Vagina (tissue), 2 donors: ENCODE measurements at regions of chr17 and their contacts with region 1.

Region 1: GRCh38 chr17:7351665-7352501 is at the start of gene KCTD11:
- DNase-seq: no peak
- H3K4me3 ChIP-seq: peak within 1 kb of the TSS; percentile 87 to 99
- H3K27ac ChIP-seq: peak within 1 kb of the TSS; percentile 96
- H3K4me1 ChIP-seq: peaks cover 52% of the 10 kb centered on the region
- H3K27me3 ChIP-seq: no peaks in the 10 kb centered on the region
- CTCF ChIP-seq: peak in 2 of 3 experiments; percentile 10
- POLR2A ChIP-seq: peak in 1 of 2 donors; percentile 47
- total RNA-seq, gene KCTD11: 12.5 TPM

Region 2: GRCh38 chr17:7314719-7315569 is 36.9 kb before region 1 on chr17 and contains the start of gene GPS2:
- intact Hi-C with region 1: loop called (anchors 5 kb)
- DNase-seq: no peak
- H3K4me3 ChIP-seq: peak within 1 kb of the TSS; percentile 87 to 95
- H3K27ac ChIP-seq: peak within 1 kb of the TSS; percentile 91
- H3K4me1 ChIP-seq: peaks cover 50% of the 10 kb centered on the region
- H3K27me3 ChIP-seq: no peaks in the 10 kb centered on the region
- CTCF ChIP-seq: no peak
- POLR2A ChIP-seq: peak in 1 of 2 donors; percentile 60
- total RNA-seq, gene GPS2: 51.1 TPM

Region 3: GRCh38 chr17:7363311-7363710 is 11.4 kb after region 1 on chr17:
- intact Hi-C with region 1: no loop called
- DNase-seq: no peak
- H3K4me3 ChIP-seq: no peak overlapping the region
- H3K27ac ChIP-seq: no peak overlapping the region
- H3K4me1 ChIP-seq: no peaks in the 10 kb centered on the region
- H3K27me3 ChIP-seq: no peaks in the 10 kb centered on the region
- CTCF ChIP-seq: no peak
- POLR2A ChIP-seq: no peak

Region 4: GRCh38 chr17:7404737-7405349 is 53.0 kb after region 1 on chr17:
- intact Hi-C with region 1: loop called (anchors 5 kb)
- DNase-seq: no peak
- H3K4me3 ChIP-seq: peak overlapping the region; percentile 87 to 98
- H3K27ac ChIP-seq: peak overlapping the region; percentile 98
- H3K4me1 ChIP-seq: peaks cover 34% of the 10 kb centered on the region
- H3K27me3 ChIP-seq: no peaks in the 10 kb centered on the region
- CTCF ChIP-seq: no peak
- POLR2A ChIP-seq: peak in 1 of 2 donors; percentile 56

Region 5: GRCh38 chr17:7435221-7435675 is 83.4 kb after region 1 on chr17 and contains the start of gene TMEM102:
- intact Hi-C with region 1: loop called (anchors 5 kb)
- DNase-seq: peak in 1 of 2 donors; percentile 95
- H3K4me3 ChIP-seq: peak within 1 kb of the TSS; percentile 34 to 49
- H3K27ac ChIP-seq: peak within 1 kb of the TSS; percentile 81
- H3K4me1 ChIP-seq: peaks cover 48% of the 10 kb centered on the region
- H3K27me3 ChIP-seq: no peaks in the 10 kb centered on the region
- CTCF ChIP-seq: no peak
- POLR2A ChIP-seq: peak in 1 of 2 donors; percentile 20
- total RNA-seq, gene TMEM102: 9.8 TPM

Region 6: GRCh38 chr17:7484067-7484918 is 132.4 kb after region 1 on chr17 and contains the start of gene POLR2A:
- intact Hi-C with region 1: loop called (anchors 5 kb)
- DNase-seq: peak in 1 of 2 donors; percentile 100
- H3K4me3 ChIP-seq: peak within 1 kb of the TSS; percentile 53 to 64
- H3K27ac ChIP-seq: peak within 1 kb of the TSS; percentile 100
- H3K4me1 ChIP-seq: peaks cover 74% of the 10 kb centered on the region
- H3K27me3 ChIP-seq: no peaks in the 10 kb centered on the region
- CTCF ChIP-seq: no peak
- POLR2A ChIP-seq: peak; percentile 92 to 100
- total RNA-seq, gene POLR2A: 118 TPM

Region 7: DNA sequence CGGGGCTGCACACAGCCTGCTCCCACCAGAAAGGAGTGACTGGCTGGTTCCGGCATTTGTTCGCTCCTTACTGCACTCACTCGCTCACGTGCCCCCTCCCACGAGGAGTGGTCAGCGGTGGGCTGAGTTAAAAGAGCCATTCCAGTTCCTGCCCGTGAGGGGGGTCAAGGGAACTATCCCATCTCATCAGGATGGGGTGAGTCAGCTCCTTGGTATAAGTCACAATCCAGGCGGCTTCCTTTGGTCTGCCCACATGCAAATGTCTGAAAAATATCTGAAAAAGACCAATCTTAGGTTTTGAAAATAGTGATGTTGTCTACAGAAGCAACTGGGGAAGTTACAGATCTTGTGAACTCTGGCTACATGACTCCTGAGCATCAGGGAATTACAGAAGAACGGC is 187.0 kb after region 1 on chr17:
- intact Hi-C with region 1: no loop called
- DNase-seq: no peak
- H3K4me3 ChIP-seq: no peak overlapping the region
- H3K27ac ChIP-seq: no peak overlapping the region
- H3K4me1 ChIP-seq: no peaks in the 10 kb centered on the region
- H3K27me3 ChIP-seq: no peaks in the 10 kb centered on the region
- CTCF ChIP-seq: no peak
- POLR2A ChIP-seq: no peak

Region 8: DNA sequence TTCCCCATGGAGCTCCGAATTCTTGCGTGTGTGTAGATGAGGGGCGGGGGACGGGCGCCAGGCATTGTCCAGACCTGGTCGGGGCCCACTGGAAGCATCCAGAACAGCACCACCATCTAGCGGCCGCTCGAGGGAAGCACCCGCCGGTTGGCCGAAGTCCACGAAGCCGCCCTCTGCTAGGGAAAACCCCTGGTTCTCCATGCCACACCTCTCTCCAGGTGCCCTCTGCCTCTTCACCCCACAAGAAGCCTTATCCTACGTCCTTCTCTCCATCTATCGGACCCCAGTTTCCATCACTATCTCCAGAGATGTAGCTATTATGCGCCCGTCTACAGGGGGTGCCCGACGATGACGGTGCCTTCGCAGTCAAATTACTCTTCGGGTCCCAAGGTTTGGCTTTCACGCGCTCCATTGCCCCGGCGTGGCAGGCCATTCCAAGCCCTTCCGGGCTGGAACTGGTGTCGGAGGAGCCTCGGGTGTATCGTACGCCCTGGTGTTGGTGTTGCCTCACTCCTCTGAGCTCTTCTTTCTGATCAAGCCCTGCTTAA is 209.2 kb after region 1 on chr17:
- intact Hi-C with region 1: loop called (anchors 10 kb)
- DNase-seq: peak in 1 of 2 donors; percentile 92
- H3K4me3 ChIP-seq: peak overlapping the region; percentile 70 to 82
- H3K27ac ChIP-seq: peak overlapping the region; percentile 88
- H3K4me1 ChIP-seq: peaks cover 70% of the 10 kb centered on the region
- H3K27me3 ChIP-seq: no peaks in the 10 kb centered on the region
- CTCF ChIP-seq: peak; percentile 64 to 90 (median 89)
- POLR2A ChIP-seq: no peak